ENCODE measurements at regions of chr3 and their contacts with region 1.

Region 1: DNA sequence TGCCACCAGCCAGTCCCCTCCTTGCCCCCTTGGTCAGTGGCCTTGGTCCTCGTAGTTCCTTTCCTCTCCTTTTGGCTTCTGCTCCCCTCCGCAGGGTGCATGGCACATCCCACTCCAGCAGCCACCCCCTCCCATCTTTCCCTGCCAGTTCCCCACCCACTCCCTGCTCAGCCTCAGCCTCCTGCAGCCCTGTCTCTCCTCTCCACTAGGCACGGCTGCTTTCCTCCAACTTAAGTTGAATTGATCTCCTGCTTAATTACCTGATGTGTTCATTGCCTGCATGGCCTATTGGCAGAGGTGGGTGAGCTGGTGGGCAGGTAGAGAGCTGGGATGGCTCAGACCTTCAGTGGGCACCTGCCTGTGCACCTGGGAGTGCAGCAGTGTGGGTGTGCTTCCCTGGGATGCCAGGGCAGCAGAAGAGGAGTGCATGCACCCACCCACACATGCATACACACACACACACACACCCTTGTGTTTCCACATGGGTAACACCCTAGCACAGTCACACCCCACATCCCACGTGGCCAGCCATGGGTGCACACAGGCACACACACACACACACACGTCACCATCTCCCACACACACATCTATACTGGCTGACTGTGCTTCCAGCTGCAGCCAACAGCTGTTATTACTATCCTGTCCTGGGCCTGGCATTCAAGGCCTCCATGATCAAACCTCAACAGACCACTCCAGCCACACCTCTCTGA is 30.9 kb downstream of the C3orf18 start:
- DNase-seq: no peak
- H3K4me3 ChIP-seq: no peak overlapping the region
- CTCF ChIP-seq: no peak

Region 2: GRCh38 chr3:50333744-50334328 is 202.8 kb before region 1 on chr3:
- in situ Hi-C with region 1: loop called (anchors 5 kb)
- DNase-seq: no peak
- H3K4me3 ChIP-seq: no peak overlapping the region
- CTCF ChIP-seq: no peak

Region 3: GRCh38 chr3:50423543-50423942 is 113.1 kb before region 1 on chr3:
- in situ Hi-C with region 1: loop called (anchors 5 kb)
- DNase-seq: no peak
- H3K4me3 ChIP-seq: no peak overlapping the region
- CTCF ChIP-seq: no peak

Region 4: GRCh38 chr3:50491023-50491422 is 45.6 kb before region 1 on chr3:
- in situ Hi-C with region 1: loop called (anchors 5 kb)
- DNase-seq: no peak
- H3K4me3 ChIP-seq: no peak overlapping the region
- CTCF ChIP-seq: no peak

Measured in astrocyte of the cerebellum (primary cell).